Common myeloid progenitor, CD34-positive (primary cell): ENCODE measurements at regions of chr3 and their contacts with region 1.

Region 1: DNA sequence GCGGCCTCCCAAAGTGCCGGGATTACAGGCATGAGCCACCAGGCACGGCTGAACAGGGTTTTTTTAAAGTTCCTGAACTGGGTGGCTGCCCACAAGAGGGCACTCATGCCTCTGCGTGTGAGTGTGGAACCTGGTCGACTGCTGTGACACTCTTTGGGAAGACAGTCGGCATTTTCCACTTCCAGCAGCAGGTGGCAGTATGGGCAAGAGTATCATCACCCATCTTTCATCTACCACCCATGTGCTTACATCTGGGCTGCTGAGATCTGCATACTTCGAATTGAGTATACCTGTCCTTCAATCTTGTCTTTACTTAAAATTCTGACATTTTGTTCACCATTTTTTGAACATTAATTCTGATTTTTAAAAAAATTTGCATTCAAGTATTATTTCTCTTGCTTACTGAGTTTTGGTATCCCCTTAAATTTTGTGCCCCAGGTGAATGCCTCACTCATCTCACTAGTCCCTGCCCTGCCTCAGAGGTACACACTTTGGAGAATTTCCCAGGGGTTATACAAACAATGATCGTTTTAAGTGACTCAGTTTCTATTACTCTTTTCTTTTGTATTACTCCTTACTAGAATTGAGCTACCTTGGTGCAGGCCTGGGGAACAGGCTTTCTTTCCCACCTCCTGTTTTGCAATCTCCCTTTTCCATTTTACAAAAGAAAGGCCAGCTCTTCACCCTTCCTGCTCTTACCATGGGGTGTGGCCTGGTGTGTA is 11.8 kb downstream of the CLEC3B start:
- DNase-seq: peak; percentile 93 to 97 (median 96)
- H3K4me3 ChIP-seq: peak overlapping the region in 1 of 7 experiments; percentile 29
- H3K27ac ChIP-seq: no peak overlapping the region
- H3K4me1 ChIP-seq: peaks cover 1 to 48% (median 40%) of the 10 kb centered on the region in 4 experiments
- H3K27me3 ChIP-seq: no peaks in the 10 kb centered on the region

Region 2: DNA sequence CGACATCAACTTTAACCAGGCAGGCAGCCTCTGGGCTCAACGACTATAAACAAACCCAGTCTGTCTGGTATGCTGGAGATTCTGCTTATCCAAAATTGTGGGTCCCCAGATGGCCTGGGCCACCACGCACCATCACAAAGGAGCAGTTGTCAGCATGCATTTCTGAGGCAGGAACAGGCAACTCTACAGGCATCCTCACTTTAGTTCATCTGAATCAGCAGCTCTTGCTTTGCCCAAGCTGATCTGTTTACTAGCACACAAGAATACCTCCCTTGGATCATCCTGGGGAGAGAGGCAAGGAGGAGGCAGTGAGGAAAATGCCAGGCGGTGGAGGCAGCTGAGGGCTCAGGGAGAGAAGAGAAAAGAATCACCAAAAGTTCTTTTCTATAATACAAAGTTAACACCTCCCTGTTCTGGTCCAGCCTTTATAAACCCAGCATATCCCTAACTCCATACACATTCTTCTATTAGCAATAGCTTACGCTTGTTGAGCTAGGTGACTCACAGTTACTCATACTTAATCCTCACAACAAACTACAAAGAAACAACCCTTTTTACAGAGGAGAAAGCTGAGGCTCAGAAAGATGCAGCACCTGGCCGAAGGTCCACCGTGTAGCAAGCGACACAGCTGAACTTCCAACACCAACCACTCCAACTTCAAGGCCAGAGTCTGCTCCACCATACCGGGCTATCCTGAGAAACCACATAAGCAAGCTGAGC is 95.5 kb before region 1 on chr3:
- CTCF ChIA-PET with region 1: no interaction called
- POLR2A ChIA-PET with region 1: no interaction called
- DNase-seq: no peak
- H3K4me3 ChIP-seq: no peak overlapping the region
- H3K27ac ChIP-seq: no peak overlapping the region
- H3K4me1 ChIP-seq: no peaks in the 10 kb centered on the region
- H3K27me3 ChIP-seq: no peaks in the 10 kb centered on the region

Region 3: DNA sequence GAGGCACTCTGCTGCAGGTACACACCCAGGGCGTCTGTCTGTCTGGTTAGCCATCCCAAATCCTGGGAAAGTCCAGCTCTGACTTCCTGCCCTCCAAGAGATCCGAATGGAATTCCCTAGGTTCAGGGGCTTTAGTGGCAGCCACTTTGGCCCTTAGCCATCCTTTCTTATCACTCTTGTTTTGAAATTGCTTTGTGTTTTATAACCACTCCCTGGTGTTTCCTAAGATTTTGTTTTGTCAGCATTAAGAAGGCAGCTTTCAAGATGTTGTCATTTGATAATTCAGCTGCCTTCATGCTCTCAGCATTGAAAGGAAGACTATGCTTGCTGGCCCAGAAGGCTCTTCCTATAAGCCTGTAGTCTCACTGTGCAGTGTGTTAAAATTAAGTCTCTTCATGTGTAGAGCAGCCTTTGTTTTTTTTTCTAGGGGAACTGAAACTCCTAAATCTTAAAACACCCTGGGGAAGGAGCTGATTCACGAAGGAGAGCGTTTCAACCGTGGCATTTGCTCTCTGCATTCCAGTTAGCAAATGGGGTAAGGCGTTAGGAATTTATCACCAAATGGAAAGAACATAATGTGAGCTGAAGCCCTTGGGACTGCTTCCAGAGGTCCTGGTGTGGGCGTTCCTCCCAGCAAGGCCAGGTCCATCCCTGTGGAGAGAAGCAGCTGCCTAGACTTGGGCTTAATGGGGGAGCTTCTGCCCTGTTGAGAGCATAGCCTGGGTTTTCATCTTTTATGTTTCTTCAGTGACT is 26.0 kb before region 1 on chr3:
- CTCF ChIA-PET with region 1: interaction called, 19 read pairs
- POLR2A ChIA-PET with region 1: no interaction called
- DNase-seq: peak; percentile 82 to 97 (median 92)
- H3K4me3 ChIP-seq: peak overlapping the region in 3 of 7 experiments; percentile 1 to 39 (median 35)
- H3K27ac ChIP-seq: peak overlapping the region; percentile 52 to 74
- H3K4me1 ChIP-seq: peaks cover 4 to 58% (median 35%) of the 10 kb centered on the region in 4 experiments
- H3K27me3 ChIP-seq: no peaks in the 10 kb centered on the region

Region 4: GRCh38 chr3:45017791-45018190 is 20.1 kb before region 1 on chr3:
- CTCF ChIA-PET with region 1: interaction called, 19 read pairs
- POLR2A ChIA-PET with region 1: no interaction called
- DNase-seq: peak; percentile 40 to 92 (median 87)
- H3K4me3 ChIP-seq: peak overlapping the region in 1 of 7 experiments; percentile 39
- H3K27ac ChIP-seq: peak overlapping the region; percentile 37 to 62
- H3K4me1 ChIP-seq: peaks cover 5 to 75% (median 38%) of the 10 kb centered on the region in 4 experiments
- H3K27me3 ChIP-seq: no peaks in the 10 kb centered on the region

Region 5: GRCh38 chr3:45055411-45056143 is 17.7 kb after region 1 on chr3:
- CTCF ChIA-PET with region 1: interaction called, 77 read pairs
- POLR2A ChIA-PET with region 1: no interaction called
- DNase-seq: peak; percentile 45 to 66 (median 65)
- H3K4me3 ChIP-seq: no peak overlapping the region
- H3K27ac ChIP-seq: no peak overlapping the region
- H3K4me1 ChIP-seq: peaks cover 0 to 2% (median 0%) of the 10 kb centered on the region in 4 experiments
- H3K27me3 ChIP-seq: no peaks in the 10 kb centered on the region

Region 6: DNA sequence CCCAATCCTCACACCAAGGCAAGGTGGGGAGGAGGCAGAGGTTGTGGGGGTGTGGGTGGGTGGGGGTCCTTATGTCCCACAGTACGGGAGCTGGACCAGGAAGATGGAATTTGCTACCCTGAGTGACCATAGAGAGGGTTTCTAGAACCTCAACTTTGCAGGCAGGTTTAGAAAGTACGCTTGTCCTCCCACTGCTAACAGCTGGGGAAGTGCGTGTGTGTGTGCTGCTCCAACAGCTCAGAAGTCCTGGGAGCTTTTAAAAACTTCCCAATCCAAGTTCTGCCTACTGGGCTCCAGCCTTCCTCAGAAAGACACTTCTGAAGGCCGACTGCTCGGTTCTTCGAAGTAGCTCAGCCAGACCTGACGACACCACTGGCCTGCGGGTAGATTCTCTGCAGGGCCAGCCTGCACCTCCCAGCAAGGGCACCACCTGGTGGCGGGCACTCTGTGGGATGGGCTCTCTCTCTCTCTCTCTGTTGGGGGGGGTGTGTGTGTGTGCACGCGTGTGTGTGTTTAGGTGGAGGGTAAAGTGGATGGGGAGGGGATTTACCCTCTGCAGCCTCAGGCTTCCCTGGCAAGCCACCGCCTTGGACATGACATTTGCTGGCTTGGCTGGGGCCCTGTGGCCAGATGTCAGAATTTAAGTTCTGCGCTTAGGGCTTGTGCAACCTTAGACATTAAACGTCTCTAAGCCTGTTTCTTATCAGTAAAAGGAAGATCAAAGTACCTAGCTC is 172.6 kb after region 1 on chr3:
- CTCF ChIA-PET with region 1: interaction called, 300 read pairs
- POLR2A ChIA-PET with region 1: no interaction called
- DNase-seq: peak; percentile 82 to 90 (median 89)
- H3K4me3 ChIP-seq: no peak overlapping the region
- H3K27ac ChIP-seq: no peak overlapping the region
- H3K4me1 ChIP-seq: peaks cover 0 to 21% (median 17%) of the 10 kb centered on the region in 4 experiments
- H3K27me3 ChIP-seq: no peaks in the 10 kb centered on the region

Region 7: DNA sequence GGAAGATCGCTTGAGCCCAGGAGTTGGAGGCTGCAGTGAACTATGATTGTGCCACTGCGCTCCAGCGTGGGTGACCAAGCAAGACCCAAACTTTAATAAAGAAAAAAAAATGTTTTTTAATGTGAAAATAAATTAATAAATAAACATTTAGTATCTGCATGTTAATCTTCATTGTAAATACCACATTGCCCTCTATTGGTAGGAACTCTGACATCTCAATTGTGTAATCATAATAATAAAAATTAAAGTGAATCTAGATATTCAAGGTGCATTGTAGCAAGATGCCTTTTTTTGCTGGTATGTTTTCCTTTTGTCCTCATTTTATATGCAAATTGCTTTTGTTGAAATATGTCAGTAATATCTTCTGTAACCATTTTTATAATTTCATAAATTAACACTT is 461.6 kb after region 1 on chr3:
- CTCF ChIA-PET with region 1: interaction called, 37 read pairs
- POLR2A ChIA-PET with region 1: no interaction called
- DNase-seq: peak; percentile 47 to 71 (median 69)
- H3K4me3 ChIP-seq: no peak overlapping the region
- H3K27ac ChIP-seq: no peak overlapping the region
- H3K4me1 ChIP-seq: peaks cover 0 to 11% (median 7%) of the 10 kb centered on the region in 4 experiments
- H3K27me3 ChIP-seq: no peaks in the 10 kb centered on the region

Region 8: GRCh38 chr3:45507820-45508317 is 470.0 kb after region 1 on chr3:
- CTCF ChIA-PET with region 1: interaction called, 31 read pairs
- POLR2A ChIA-PET with region 1: interaction called, 4 read pairs
- DNase-seq: peak; percentile 17 to 63 (median 61)
- H3K4me3 ChIP-seq: no peak overlapping the region
- H3K27ac ChIP-seq: no peak overlapping the region
- H3K4me1 ChIP-seq: peaks cover 0 to 12% (median 8%) of the 10 kb centered on the region in 4 experiments
- H3K27me3 ChIP-seq: no peaks in the 10 kb centered on the region